MCF 10A (cell line): ENCODE measurements at regions of chr6 and their contacts with region 1.

Region 1: DNA sequence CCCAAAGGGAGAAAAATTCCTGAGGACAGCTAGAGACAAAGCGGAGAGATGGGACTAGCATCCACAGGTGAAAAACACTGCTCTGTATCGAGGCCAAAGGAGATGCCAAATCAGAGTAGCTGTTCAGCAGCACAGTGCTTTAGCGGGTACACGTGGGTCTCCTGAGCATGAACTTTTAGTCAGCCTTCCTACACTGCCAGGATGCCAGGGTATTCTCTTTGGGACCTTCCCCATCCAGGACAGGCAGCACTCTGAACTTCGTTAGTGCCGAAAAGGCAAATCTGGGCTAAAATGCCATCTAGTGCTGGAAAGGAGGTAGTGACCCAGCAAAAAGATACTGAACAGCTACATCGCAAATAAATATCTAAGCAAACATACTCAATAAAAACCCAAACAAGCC is 64.9 kb downstream of the C6orf58 start:
- DNase-seq: peak; percentile 55
- H3K4me3 Mint-ChIP-seq: no peak overlapping the region
- H3K27ac Mint-ChIP-seq: no peak overlapping the region
- H3K4me1 Mint-ChIP-seq: no peaks in the 10 kb centered on the region
- H3K27me3 Mint-ChIP-seq: peaks cover 54% of the 10 kb centered on the region
- CTCF ChIP-seq: peak; percentile 52

Region 2: DNA sequence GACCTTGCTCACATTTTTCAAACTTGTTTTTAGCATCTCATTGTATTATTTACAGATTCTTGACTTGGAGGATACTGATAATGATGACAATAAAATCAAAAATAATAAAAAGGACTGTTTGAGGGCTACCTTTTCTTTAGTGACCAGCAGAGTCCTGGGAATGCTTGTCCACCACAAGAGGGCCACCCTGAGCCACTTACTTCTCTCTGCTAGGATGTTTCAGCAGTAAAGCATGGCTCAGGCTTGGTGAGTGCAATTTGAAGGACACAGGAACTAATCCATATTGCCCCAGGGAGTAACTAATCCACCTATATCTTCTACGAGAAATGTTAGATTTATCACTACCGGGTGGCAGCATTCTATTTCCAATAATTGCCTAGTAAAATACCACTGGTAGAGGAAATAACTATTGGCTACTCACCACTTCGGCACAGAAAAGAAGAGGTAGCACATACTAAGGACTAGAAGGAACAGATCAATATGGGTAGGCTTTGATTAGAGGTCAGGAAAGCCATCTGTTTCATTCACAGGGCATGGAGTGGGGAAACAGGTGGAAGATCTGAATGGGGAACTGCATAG is 176.9 kb before region 1 on chr6:
- CTCF ChIA-PET with region 1: interaction called, 3 read pairs
- POLR2A ChIA-PET with region 1: no interaction called
- intact Hi-C with region 1: loop called (anchors 10 kb)
- DNase-seq: peak; percentile 68
- H3K4me3 Mint-ChIP-seq: no peak overlapping the region
- H3K27ac Mint-ChIP-seq: no peak overlapping the region
- H3K4me1 Mint-ChIP-seq: no peaks in the 10 kb centered on the region
- H3K27me3 Mint-ChIP-seq: no peaks in the 10 kb centered on the region
- CTCF ChIP-seq: peak; percentile 77

Region 3: DNA sequence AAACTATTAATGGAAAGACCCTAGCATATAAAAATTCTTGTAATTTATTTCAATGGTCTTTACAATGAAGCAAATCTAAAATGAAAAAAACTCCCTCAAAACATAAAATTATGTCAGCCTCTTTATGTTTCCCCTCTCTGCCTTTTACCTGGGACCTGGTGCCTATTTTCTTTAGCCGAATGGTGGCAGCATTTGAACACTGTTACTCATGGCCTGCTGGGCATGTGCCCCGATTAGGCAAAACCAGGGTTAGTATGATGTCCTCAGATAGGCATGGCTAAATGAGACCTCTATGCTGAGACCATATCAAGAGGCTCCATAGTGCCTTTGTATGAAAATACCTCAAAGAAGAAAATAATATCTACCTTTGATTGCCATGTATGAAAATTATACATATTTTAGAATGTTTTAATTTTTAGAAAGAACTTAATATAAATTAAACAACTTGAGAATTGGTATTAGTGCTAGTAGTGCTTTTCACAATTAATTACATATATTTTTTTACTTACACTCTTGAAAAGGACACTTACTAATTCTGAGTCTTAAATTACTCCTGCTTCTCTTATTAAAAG is 87.4 kb before region 1 on chr6:
- CTCF ChIA-PET with region 1: interaction called, 53 read pairs
- POLR2A ChIA-PET with region 1: no interaction called
- intact Hi-C with region 1: loop called (anchors 1 kb)
- DNase-seq: peak; percentile 69
- H3K4me3 Mint-ChIP-seq: no peak overlapping the region
- H3K27ac Mint-ChIP-seq: no peak overlapping the region
- H3K4me1 Mint-ChIP-seq: peaks cover 6% of the 10 kb centered on the region
- H3K27me3 Mint-ChIP-seq: peaks cover 10% of the 10 kb centered on the region
- CTCF ChIP-seq: peak; percentile 47

Region 4: DNA sequence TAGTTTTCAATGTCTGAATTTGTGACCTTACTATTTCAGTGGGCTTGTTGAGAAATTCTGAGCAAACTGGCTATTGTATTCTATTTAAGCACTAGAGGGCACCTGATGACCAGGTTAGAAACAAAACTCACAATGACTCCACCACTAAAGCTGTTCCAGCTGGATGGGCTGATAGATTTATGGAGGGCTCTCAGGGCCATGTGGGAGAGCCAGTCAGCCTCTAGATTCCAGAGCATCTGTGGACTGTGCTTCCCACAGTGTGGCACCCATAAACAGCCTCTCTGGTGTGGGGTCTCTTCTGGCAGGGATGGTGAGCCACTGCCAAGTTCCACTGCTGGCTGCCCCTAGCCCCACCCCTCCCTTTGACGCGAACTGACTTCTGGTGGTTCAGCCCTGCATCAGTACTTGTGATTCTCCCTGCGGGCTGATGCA is 35.8 kb before region 1 on chr6:
- CTCF ChIA-PET with region 1: interaction called, 72 read pairs
- POLR2A ChIA-PET with region 1: interaction called, 4 read pairs
- intact Hi-C with region 1: loop called (anchors 1 kb)
- DNase-seq: peak; percentile 61
- H3K4me3 Mint-ChIP-seq: no peak overlapping the region
- H3K27ac Mint-ChIP-seq: no peak overlapping the region
- H3K4me1 Mint-ChIP-seq: no peaks in the 10 kb centered on the region
- H3K27me3 Mint-ChIP-seq: no peaks in the 10 kb centered on the region
- CTCF ChIP-seq: peak; percentile 47

Region 5: GRCh38 chr6:127630800-127631199 is 11.1 kb before region 1 on chr6:
- CTCF ChIA-PET with region 1: interaction called, 32 read pairs
- POLR2A ChIA-PET with region 1: no interaction called
- intact Hi-C with region 1: no loop called
- DNase-seq: no peak
- H3K4me3 Mint-ChIP-seq: no peak overlapping the region
- H3K27ac Mint-ChIP-seq: no peak overlapping the region
- H3K4me1 Mint-ChIP-seq: peaks cover 6% of the 10 kb centered on the region
- H3K27me3 Mint-ChIP-seq: no peaks in the 10 kb centered on the region
- CTCF ChIP-seq: no peak